ENCODE measurements at regions of chr19 and their contacts with region 1.

Region 1: DNA sequence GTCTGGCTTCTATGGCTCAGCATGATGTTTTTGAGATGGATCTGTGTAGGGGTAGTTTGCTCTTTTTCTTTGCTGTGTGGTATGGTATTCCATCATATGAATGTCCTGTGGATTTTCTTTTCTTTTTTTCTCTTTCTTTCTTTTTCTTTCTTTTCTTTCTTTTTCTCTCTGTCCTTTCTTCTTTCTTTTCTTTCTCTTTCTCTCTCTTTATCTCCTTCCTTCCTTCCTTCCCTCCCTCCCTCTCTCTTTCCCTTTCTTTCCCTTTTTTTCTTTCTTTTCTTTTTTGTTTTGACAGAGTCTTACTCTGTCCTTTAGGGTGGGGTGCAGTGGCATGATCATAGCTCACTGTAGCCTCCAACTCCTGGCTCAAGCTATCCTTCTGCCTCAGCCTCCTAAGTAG is 9.0 kb upstream of the HNRNPUL1 start:
- DNase-seq: no peak
- ATAC-seq: no peak
- H3K4me3 ChIP-seq: no peak overlapping the region
- H3K27ac ChIP-seq: no peak overlapping the region
- H3K4me1 ChIP-seq: no peaks in the 10 kb centered on the region
- H3K27me3 ChIP-seq: no peaks in the 10 kb centered on the region
- CTCF ChIP-seq: no peak

Region 2: GRCh38 chr19:41206926-41207750 is 48.0 kb before region 1 on chr19:
- intact Hi-C with region 1: loop called in 1 of 3 experiments (anchors 5 kb)
- DNase-seq: no peak
- ATAC-seq: peak in 2 of 4 donors; percentile 13 to 14
- H3K4me3 ChIP-seq: no peak overlapping the region
- H3K27ac ChIP-seq: no peak overlapping the region
- H3K4me1 ChIP-seq: no peaks in the 10 kb centered on the region
- H3K27me3 ChIP-seq: peaks cover 0 to 9% (median 0%) of the 10 kb centered on the region in 4 donors
- CTCF ChIP-seq: no peak

Region 3: DNA sequence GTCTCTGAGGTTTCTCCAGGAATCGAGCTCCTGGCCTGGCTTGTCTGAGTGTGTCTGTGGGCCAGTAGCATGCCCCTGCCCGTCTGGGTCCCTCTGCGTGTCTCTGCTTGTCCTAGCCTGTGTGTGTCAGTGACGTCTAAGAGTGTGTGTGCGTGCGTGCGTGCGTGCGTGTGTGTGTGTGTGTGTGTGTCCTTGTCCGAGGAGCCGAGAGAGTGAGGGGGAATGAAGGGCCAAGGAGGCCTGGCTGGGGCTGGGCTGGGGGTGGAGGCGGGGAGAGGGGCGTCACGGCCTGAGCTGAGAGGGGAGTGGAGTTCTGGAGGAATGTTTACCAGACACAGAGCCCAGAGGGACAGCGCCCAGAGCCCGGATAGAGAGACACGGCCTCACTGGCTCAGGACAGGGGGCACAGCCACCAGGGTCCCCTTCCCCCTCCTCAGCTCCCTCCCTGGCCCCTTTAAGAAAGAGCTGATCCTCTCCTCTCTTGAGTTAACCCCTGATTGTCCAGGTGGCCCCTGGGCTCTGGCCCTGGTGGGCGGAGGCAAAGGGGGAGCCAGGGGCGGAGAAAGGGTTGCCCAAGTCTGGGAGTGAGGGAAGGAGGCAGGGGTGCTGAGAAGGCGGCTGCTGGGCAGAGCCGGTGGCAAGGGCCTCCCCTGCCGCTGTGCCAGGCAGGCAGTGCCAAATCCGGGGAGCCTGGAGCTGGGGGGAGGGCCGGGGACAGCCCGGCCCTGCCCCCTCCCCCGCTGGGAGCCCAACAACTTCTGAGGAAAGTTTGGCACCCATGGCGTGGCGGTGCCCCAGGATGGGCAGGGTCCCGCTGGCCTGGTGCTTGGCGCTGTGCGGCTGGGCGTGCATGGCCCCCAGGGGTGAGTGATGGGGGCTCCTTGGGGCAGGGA is 36.3 kb before region 1 on chr19 and contains the start of gene AXL:
- intact Hi-C with region 1: loop called in 1 of 3 experiments (anchors 5 kb)
- DNase-seq: peak in 3 of 6 donors; percentile 12 to 40 (median 38)
- ATAC-seq: peak; percentile 44 to 67 (median 63)
- H3K4me3 ChIP-seq: peak within 1 kb of the TSS in 3 of 4 donors; percentile 7 to 33 (median 17)
- H3K27ac ChIP-seq: peak within 1 kb of the TSS in 2 of 4 donors; percentile 28 to 30
- H3K4me1 ChIP-seq: no peaks in the 10 kb centered on the region
- H3K27me3 ChIP-seq: no peaks in the 10 kb centered on the region
- CTCF ChIP-seq: no peak
- total RNA-seq, gene AXL: 1.2 to 16.6 (median 5.2) TPM

Measured in pancreas (tissue), 10 donors.